ENCODE measurements at regions of chrX and their contacts with region 1.

Region 1: DNA sequence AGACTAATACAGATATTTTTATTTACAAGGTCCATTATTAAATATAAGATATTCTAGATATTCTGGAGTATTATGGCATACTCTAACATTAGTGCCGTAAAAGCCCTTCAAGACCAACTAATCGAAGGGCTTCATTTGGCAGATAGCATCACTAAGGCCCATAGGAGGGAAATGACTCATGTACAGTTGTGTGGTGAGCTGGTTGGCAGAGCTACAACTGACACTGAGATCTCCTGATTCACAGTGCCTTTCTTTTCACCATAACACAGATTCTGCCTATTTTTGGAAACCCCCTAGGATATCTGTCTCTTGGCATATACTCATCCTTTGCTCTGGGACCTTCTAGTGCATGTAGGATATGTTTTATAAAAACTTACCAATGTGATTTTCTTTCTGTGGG is 201.7 kb upstream of the AFF2 start:
- DNase-seq: no peak
- H3K4me3 Mint-ChIP-seq: no peak overlapping the region
- H3K27ac Mint-ChIP-seq: no peak overlapping the region
- H3K4me1 Mint-ChIP-seq: peaks cover 26% of the 10 kb centered on the region
- H3K27me3 Mint-ChIP-seq: no peaks in the 10 kb centered on the region

Region 2: GRCh38 chrX:148333989-148334388 is 35.3 kb after region 1 on chrX:
- CTCF ChIA-PET with region 1: interaction called, 7 read pairs
- intact Hi-C with region 1: loop called (anchors 5 kb)
- DNase-seq: peak; percentile 29
- H3K4me3 Mint-ChIP-seq: no peak overlapping the region
- H3K27ac Mint-ChIP-seq: peak overlapping the region; percentile 64
- H3K4me1 Mint-ChIP-seq: peaks cover 69% of the 10 kb centered on the region
- H3K27me3 Mint-ChIP-seq: no peaks in the 10 kb centered on the region

Measured in activated naive CD4-positive, alpha-beta T cell treated with anti-CD3 and anti-CD28 coated beads for 36 hours (primary cell).